ENCODE measurements at regions of chr16 and their contacts with region 1.

Region 1: DNA sequence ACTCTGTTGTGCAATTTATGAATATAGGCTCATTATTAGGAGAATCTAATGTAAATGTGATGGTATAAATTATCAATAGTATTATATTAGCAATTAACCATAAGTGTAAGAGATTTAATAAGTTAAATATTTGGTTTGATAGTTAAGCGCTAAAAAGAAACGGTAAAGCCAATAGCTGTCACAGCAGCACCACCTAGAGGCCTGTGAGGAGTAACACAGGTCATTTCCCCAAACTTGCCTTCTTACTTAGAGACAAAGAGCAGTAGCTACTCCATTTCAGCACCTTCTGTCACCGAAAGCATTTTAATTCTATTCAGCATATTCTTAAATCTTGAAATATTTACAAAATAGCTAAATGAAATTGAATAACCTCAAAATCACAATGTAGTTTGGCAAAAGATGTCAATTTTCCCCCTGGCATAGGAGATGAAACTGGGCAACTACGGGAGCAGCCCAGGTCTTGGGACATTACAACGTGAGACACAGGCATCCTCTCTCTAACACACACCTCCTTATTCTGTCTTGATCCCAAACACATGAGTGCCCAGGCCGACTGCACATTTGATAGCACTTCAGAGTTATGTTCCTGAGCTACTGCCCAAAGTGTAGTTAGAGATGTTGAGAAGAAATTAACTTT is 14.2 kb upstream of the DYNLRB2 start:
- DNase-seq: peak in 6 of 10 donors; percentile 18 to 78 (median 42)

Region 2: DNA sequence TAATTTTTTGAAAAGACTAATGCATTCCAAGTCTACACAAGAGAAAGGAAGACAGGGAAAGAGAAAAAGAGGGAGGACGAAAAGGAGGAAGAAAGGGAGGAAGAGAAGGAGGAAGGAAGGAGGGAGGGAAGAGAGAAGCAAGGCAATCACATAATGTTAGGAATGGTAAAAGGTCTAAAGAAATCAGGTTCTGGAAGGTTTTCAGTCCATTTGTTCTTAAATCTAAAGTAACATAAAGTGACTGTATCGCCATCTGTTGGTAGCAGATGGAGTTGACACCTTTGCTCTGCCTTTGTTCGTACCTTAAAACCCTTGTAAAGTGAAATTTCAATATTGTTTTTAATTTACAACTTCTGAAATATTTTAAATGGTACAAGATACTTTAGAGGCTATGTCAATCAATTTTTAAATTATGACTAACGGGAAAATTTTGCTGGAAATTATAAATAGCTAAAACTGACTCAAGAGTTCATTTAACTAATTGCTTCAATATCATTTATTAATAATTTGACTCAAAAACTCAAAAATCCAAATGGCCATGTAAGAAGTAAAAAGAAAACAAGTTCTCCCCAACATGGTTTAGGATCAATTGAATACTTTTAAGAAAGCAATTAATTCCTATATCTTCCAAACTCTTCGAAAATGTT is 298.3 kb after region 1 on chr16:
- intact Hi-C with region 1: loop called (anchors 10 kb)
- DNase-seq: no peak